PC-3 (cell line): ENCODE measurements at regions of chr1 and their contacts with region 1.

Region 1: DNA sequence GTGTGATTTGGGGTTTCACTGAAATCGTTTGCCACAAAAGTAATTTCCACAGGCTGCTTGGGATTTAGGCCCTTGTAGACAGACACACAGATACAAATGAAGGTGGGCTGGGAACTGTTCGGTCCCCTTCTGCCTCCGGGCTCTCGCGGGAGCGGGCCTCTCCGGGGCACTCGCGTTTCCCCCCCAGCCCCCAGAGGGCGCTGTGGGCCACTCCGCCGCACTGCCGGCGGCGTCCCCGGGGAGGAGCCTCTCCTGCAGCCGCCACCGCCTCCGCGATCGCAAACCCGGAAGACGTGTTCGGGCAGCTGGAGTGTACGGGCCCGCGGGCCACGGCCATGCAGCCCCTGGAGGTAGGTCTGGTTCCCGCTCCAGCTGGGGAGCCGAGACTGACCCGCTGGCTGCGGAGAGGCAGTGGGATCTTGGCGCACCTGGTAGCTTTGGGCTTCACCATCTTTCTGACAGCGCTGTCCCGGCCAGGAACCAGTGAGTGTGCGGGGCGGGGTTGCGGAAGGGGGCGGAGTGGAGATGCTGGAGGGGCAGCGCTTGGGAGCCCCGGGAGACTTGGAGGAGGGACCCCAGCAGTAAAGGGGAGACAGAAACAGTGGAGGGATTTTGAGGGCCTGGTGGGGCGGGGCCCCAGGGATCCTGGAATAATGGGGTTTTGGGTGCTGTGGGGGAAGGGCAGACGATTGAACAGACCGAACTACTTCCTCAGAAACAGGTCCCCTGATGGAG is at the start of gene CYB561D1:
- DNase-seq: peak; percentile 88
- ATAC-seq: peak; percentile 91
- H3K4me3 ChIP-seq: peak within 1 kb of the TSS; percentile 80
- H3K27ac ChIP-seq: no peak within 1 kb of the TSS
- H3K4me1 ChIP-seq: peaks cover 12% of the 10 kb centered on the region; the same call in 1 of the 2 replicates
- H3K27me3 ChIP-seq: no peaks in the 10 kb centered on the region
- CTCF ChIP-seq: peak; percentile 92
- total RNA-seq, gene CYB561D1: 2.7 and 4.2 TPM in 2 replicates

Region 2: DNA sequence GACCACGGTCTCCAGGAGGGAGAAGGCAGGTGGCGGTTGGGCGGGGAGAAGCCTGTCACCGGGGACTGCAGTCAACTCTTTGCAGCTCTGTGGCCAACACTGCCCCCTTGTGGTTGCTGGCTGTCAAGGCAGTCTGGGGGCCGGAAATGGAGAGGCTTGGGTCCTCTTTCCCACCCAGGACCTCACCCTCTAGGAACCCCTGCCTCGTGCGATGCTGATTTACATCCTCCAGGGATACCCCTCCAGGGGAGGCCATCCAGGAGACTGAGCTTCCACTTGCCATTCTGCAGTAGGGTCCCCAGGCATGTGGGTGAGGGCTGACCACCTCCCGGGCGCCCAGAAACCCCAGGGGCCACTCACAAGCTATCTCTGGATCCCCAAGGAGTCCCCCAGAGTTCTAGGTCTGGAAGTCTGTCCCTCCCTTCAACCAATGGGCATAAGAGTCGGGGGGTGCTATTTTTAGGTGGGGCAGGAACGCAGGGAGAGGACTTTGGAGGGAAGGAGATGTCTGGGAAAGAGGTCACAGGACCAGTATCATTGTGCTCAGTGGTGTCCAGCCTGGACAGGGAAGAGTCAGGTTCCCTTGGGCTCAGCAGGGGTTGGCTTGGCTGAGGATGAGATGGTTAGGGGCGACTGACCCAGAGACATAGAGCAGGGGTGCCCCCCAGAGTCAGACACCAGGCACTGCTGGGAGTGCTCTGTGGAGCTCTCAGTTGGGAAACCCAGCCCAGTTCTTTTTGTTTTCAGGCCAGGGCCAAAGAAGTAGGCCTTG is 38.6 kb after region 1 on chr1:
- CTCF ChIA-PET with region 1: interaction called, 34 read pairs
- POLR2A ChIA-PET with region 1: no interaction called
- intact Hi-C with region 1: loop called (anchors 1 kb)
- DNase-seq: peak; percentile 82
- ATAC-seq: peak; percentile 88
- H3K4me3 ChIP-seq: no peak overlapping the region
- H3K27ac ChIP-seq: no peak overlapping the region
- H3K4me1 ChIP-seq: no peaks in the 10 kb centered on the region
- H3K27me3 ChIP-seq: no peaks in the 10 kb centered on the region
- CTCF ChIP-seq: peak; percentile 79

Region 3: DNA sequence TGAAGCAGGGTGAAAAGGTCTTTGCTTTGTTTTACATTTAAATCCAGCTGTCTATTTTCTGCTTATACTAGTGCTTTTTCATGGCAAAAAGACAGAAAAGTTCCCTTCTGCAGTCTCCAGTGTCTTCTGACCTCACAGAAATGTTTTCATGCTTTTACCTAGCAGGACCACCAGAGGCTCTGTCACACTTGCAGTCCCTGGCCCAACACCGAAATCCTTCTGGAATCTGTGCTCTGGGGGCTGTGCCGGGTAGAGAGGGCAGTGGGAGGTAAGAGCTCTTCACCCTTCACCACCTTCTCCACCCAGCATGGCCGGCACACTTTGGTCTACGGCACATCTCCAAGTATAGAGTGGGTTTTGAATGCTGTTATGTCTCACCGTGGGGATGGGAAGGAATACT is 104.7 kb after region 1 on chr1:
- CTCF ChIA-PET with region 1: no interaction called
- POLR2A ChIA-PET with region 1: no interaction called
- intact Hi-C with region 1: no loop called
- DNase-seq: no peak
- ATAC-seq: peak; percentile 20; the same call in 1 of the 2 replicates
- H3K4me3 ChIP-seq: no peak overlapping the region
- H3K27ac ChIP-seq: no peak overlapping the region
- H3K4me1 ChIP-seq: peaks cover 5% of the 10 kb centered on the region; the same call in 1 of the 2 replicates
- H3K27me3 ChIP-seq: no peaks in the 10 kb centered on the region
- CTCF ChIP-seq: peak; percentile 36; the same call in 1 of the 2 replicates